ENCODE measurements at regions of chr3 and their contacts with region 1.

Region 1: GRCh38 chr3:42229942-42230688 is 35.9 kb downstream of the CCK start:
- DNase-seq: peak; percentile 75
- ATAC-seq: peak; percentile 73
- H3K4me3 ChIP-seq: peak overlapping the region; percentile 55; the same call in 1 of the 2 replicates
- H3K27ac ChIP-seq: no peak overlapping the region
- H3K4me1 ChIP-seq: 0 out of 2 replicates have a peak, but pooled peaks cover 5% of the 10 kb centered on the region
- H3K27me3 ChIP-seq: peaks cover 5% of the 10 kb centered on the region; the same call in 1 of the 2 replicates
- CTCF ChIP-seq: peak; percentile 90

Region 2: GRCh38 chr3:41893977-41894376 is 336.1 kb before region 1 on chr3:
- CTCF ChIA-PET with region 1: no interaction called
- POLR2A ChIA-PET with region 1: no interaction called
- intact Hi-C with region 1: loop called (anchors 1 kb)
- DNase-seq: peak; percentile 71
- ATAC-seq: peak; percentile 69
- H3K4me3 ChIP-seq: no peak overlapping the region
- H3K27ac ChIP-seq: no peak overlapping the region
- H3K4me1 ChIP-seq: no peaks in the 10 kb centered on the region
- H3K27me3 ChIP-seq: no peaks in the 10 kb centered on the region
- CTCF ChIP-seq: peak; percentile 77

Region 3: DNA sequence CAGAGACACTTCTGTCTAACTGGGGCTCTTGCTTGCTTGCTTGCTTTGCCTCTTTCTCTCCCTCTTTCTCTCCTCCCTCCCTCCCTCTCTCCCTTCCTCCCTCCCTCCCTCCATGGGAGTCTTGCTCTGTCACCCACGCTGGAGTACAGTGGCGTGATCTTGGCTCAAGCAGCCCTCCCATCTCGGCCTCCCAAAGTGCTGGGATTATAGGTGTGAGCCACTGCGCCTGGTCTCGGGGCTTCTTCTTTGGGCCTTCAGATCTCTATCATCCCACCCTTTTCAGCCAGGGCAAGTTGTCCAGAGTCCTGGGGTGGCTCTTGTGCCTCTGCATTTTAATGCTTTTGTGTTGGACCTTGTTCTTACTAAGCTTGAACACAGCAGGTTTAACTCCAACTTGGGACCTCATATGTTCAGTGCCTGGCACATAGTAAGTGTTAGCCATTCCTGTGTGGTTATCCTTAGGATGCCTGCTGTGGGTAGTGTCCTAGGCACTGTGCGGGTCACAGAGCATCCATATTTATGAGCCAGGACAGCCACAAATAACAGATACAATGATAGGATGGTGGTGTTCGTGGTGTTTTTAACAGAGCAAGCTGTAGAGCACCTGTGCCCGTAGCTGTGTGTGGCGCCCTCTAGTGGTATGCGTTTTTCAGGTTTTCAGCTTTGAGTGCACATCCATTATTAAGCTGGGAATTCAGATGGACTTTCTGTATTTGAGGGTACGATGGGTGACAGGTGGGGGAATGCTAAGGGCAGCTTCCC is 39.2 kb before region 1 on chr3:
- CTCF ChIA-PET with region 1: interaction called, 6 read pairs
- POLR2A ChIA-PET with region 1: no interaction called
- intact Hi-C with region 1: loop called (anchors 1 kb)
- DNase-seq: peak; percentile 90
- ATAC-seq: peak; percentile 94
- H3K4me3 ChIP-seq: no peak overlapping the region
- H3K27ac ChIP-seq: no peak overlapping the region
- H3K4me1 ChIP-seq: no peaks in the 10 kb centered on the region
- H3K27me3 ChIP-seq: no peaks in the 10 kb centered on the region
- CTCF ChIP-seq: peak; percentile 97

Region 4: DNA sequence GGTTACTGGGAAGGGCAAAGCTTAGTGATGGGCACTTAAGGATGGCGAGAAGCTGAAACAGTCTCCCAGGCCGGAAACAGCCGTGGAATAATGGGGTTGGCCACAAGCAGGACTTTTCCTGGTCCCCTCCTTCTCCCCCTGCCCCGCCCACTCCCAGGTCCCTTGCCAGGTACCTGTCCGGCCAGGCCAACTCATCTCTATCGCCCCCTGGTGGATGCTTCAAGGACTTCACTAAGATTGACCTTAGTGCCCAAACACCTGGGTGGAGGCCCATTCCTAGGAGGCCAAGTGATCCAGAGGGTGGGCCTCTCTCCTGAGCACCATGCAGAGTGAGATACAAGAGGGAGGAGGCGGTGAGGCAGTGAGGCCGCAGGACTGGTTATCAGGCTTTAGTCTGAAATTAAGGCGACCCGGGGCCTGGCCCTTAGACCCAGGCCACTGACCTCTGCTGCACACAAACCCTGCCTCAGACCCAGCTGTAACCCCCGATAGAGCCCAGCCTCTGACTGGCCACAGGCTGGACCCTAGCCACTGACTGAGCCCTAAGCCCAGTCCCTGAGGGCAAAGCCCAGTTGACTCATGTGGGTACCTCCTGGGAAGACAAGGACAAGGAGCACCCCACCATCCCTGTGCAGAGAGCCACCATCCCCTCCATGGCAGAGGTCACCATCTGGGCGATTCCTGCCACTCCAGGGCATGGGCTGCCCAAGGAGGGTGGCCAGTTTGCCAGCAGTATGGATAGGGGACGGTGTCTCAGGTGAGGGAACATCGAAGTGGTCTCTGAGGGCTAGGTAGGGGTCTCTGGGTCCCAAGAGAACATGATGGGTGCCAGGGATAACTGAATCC is 310.0 kb after region 1 on chr3:
- CTCF ChIA-PET with region 1: no interaction called
- POLR2A ChIA-PET with region 1: no interaction called
- intact Hi-C with region 1: loop called (anchors 1 kb)
- DNase-seq: peak; percentile 78
- ATAC-seq: peak; percentile 30
- H3K4me3 ChIP-seq: no peak overlapping the region
- H3K27ac ChIP-seq: no peak overlapping the region
- H3K4me1 ChIP-seq: peaks cover 16% of the 10 kb centered on the region
- H3K27me3 ChIP-seq: no peaks in the 10 kb centered on the region
- CTCF ChIP-seq: peak; percentile 92

Region 5: GRCh38 chr3:42880601-42881451 is 650.7 kb after region 1 on chr3:
- CTCF ChIA-PET with region 1: no interaction called
- POLR2A ChIA-PET with region 1: no interaction called
- intact Hi-C with region 1: loop called (anchors 5 kb)
- DNase-seq: peak; percentile 88
- ATAC-seq: peak; percentile 97
- H3K4me3 ChIP-seq: peak overlapping the region; percentile 68
- H3K27ac ChIP-seq: no peak overlapping the region
- H3K4me1 ChIP-seq: peaks cover 20% of the 10 kb centered on the region
- H3K27me3 ChIP-seq: no peaks in the 10 kb centered on the region
- CTCF ChIP-seq: peak; percentile 88

Measured in PC-3 (cell line).